GM12878 (cell line): ENCODE measurements at regions of chr22 and their contacts with region 1.

Region 1: DNA sequence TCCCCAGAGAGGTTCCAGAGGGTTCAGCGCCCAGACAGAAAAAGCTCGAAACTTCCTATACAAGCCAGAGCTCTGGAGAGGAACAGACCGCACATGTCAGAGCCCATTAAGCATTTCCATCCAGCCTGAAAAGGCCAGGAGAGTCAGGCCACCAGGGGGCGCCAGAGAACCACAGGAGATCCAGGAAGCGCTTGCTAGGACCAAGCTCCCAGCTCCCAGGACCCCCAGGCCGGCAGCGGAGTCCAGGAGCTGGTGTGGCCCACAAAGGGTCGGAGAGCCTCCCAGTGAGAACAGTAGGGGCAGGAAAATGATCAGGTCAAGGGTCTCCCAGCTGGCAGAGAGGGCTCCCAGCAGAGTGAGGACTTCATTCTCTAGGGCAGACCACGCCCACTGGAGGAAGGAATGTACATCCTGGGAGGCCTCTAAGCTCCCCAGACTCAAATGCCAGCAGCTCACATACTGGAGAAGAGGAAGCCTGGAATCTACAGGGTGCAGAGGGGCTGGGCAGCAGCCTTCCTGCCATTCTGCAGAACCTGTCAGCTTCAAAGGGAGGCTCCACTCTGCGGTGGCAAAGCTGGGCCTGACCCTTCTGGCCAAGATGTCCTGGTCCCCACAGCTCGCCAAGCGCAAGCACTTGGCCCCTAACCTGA is 2.1 kb upstream of the MEI1 start:
- DNase-seq: peak; percentile 57
- ATAC-seq: peak; percentile 94
- H3K4me3 ChIP-seq: no peak overlapping the region
- H3K27ac ChIP-seq: peak overlapping the region; percentile 48; the same call in 1 of the 2 replicates
- H3K4me1 ChIP-seq: peaks cover 19% of the 10 kb centered on the region
- H3K27me3 ChIP-seq: no peaks in the 10 kb centered on the region
- CTCF ChIP-seq: peak; percentile 97 to 98 (median 98); a peak in 5 of 6 replicates
- EP300 ChIP-seq: no peak
- POLR2A ChIP-seq: no peak
- RAD21 ChIP-seq: peak; percentile 94

Region 2: DNA sequence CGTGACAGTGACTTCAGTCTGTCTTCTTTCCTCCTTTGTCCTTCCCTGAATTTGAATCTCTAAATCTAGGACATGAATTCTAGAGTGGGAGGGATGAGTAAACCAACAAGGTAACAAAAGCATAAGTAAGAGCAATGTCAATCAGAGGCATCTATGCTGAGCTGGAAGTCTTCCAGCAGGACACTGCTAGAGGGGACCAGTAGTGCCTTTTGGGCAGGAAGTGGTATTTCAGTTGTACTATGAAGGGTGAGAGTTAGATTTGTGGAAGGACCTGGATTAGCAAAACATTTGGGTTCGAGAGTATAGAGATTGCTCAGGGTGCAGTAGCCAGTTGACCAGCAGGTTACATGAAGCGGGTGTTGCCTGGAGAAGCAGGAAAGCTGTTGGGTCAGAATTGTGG is 42.3 kb after region 1 on chr22:
- CTCF ChIA-PET with region 1: interaction called, 71 read pairs
- POLR2A ChIA-PET with region 1: interaction called, 4 read pairs
- RAD21 ChIA-PET with region 1: interaction called, 7 read pairs
- SMC1A ChIA-PET with region 1: interaction called, 6 read pairs
- in situ Hi-C with region 1: no loop called
- intact Hi-C with region 1: no loop called
- DNase-seq: peak; percentile 30
- ATAC-seq: peak; percentile 73
- H3K4me3 ChIP-seq: no peak overlapping the region
- H3K27ac ChIP-seq: peak overlapping the region; percentile 26; the same call in 1 of the 2 replicates
- H3K4me1 ChIP-seq: peaks cover 7% of the 10 kb centered on the region
- H3K27me3 ChIP-seq: no peaks in the 10 kb centered on the region
- CTCF ChIP-seq: no peak
- EP300 ChIP-seq: no peak
- POLR2A ChIP-seq: no peak
- RAD21 ChIP-seq: no peak

Region 3: GRCh38 chr22:41762980-41763779 is 65.9 kb after region 1 on chr22:
- CTCF ChIA-PET with region 1: interaction called, 69 read pairs
- POLR2A ChIA-PET with region 1: interaction called, 6 read pairs
- RAD21 ChIA-PET with region 1: interaction called, 36 read pairs
- SMC1A ChIA-PET with region 1: interaction called, 21 read pairs
- in situ Hi-C with region 1: no loop called
- intact Hi-C with region 1: no loop called
- DNase-seq: no peak
- ATAC-seq: peak; percentile 92
- H3K4me3 ChIP-seq: no peak overlapping the region
- H3K27ac ChIP-seq: no peak overlapping the region
- H3K4me1 ChIP-seq: no peaks in the 10 kb centered on the region
- H3K27me3 ChIP-seq: no peaks in the 10 kb centered on the region
- CTCF ChIP-seq: peak; percentile 50 to 74 (median 67); a peak in 5 of 6 replicates
- EP300 ChIP-seq: no peak
- POLR2A ChIP-seq: no peak
- RAD21 ChIP-seq: peak; percentile 62

Region 4: DNA sequence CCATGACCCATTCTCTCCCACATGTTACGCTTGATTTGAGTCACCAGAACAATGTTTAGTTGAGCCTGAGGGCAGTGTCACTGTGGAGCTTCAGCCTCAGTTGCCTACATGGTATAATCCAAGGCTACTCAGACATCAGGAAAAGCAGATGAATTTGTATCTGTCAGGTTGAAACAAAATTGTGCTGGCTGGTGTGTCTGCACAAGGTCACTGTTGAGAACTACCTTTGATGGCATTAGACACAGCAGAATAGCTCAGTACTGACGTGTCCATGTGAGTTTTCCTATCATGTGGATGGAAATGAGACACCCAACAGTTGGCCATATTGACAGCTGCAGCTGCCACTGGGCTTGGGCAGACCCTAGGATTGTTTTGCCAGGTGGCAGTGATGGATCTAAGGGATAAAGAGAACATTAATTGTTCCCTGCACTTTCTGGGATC is 119.0 kb after region 1 on chr22:
- CTCF ChIA-PET with region 1: interaction called, 22 read pairs
- POLR2A ChIA-PET with region 1: no interaction called
- RAD21 ChIA-PET with region 1: interaction called, 4 read pairs
- SMC1A ChIA-PET with region 1: interaction called, 10 read pairs
- in situ Hi-C with region 1: no loop called
- intact Hi-C with region 1: no loop called
- DNase-seq: no peak
- ATAC-seq: no peak
- H3K4me3 ChIP-seq: no peak overlapping the region
- H3K27ac ChIP-seq: no peak overlapping the region
- H3K4me1 ChIP-seq: no peaks in the 10 kb centered on the region
- H3K27me3 ChIP-seq: no peaks in the 10 kb centered on the region
- CTCF ChIP-seq: no peak
- EP300 ChIP-seq: no peak
- POLR2A ChIP-seq: no peak
- RAD21 ChIP-seq: no peak

Region 5: GRCh38 chr22:41873391-41873790 is 176.1 kb after region 1 on chr22:
- CTCF ChIA-PET with region 1: interaction called, 14 read pairs
- POLR2A ChIA-PET with region 1: no interaction called
- RAD21 ChIA-PET with region 1: interaction called, 3 read pairs
- SMC1A ChIA-PET with region 1: interaction called, 5 read pairs
- in situ Hi-C with region 1: no loop called
- intact Hi-C with region 1: no loop called
- DNase-seq: no peak
- ATAC-seq: peak; percentile 34
- H3K4me3 ChIP-seq: no peak overlapping the region
- H3K27ac ChIP-seq: no peak overlapping the region
- H3K4me1 ChIP-seq: no peaks in the 10 kb centered on the region
- H3K27me3 ChIP-seq: no peaks in the 10 kb centered on the region
- CTCF ChIP-seq: no peak
- EP300 ChIP-seq: no peak
- POLR2A ChIP-seq: no peak
- RAD21 ChIP-seq: no peak

Region 6: DNA sequence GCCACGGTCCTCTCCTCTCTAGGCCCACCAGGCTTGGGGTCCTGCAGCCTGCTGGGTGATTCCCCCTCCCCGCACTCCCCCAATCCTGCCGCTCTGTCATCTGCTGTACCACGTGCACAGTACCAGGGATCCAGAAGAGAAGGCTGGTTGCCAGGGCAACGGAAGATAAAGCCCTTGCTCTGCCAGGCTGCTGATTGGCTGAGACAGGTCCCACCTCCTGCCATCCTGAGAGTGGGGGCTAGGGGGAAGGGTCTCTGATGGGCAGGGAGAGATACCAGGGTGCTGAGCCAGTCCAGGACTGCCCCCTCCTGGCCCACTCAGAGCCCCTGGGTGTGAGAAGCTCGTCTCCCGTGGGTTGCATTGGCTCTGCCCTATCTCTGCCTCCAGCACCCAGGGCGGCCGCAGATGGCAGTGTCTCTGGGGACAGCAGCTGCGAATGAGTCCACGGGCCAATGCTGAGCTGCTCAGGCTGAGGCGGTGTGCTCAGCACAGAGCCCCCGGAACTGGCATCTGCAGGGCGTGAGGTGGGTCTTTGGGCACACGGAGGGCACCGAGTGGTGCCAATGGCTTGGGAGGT is 254.7 kb after region 1 on chr22 and contains the start of gene SMIM45:
- CTCF ChIA-PET with region 1: interaction called, 12 read pairs
- POLR2A ChIA-PET with region 1: interaction called, 8 read pairs
- RAD21 ChIA-PET with region 1: interaction called, 17 read pairs
- SMC1A ChIA-PET with region 1: interaction called, 4 read pairs
- in situ Hi-C with region 1: no loop called
- intact Hi-C with region 1: no loop called
- DNase-seq: no peak
- ATAC-seq: peak; percentile 35
- H3K4me3 ChIP-seq: no peak within 1 kb of the TSS
- H3K27ac ChIP-seq: no peak within 1 kb of the TSS
- H3K4me1 ChIP-seq: peaks cover 41% of the 10 kb centered on the region
- H3K27me3 ChIP-seq: no peaks in the 10 kb centered on the region
- CTCF ChIP-seq: peak in 1 of 3 experiments; percentile 19; a peak in 2 of 6 replicates
- EP300 ChIP-seq: no peak
- POLR2A ChIP-seq: no peak
- RAD21 ChIP-seq: no peak

Region 7: GRCh38 chr22:42889304-42889703 is 1192.1 kb after region 1 on chr22:
- CTCF ChIA-PET with region 1: no interaction called
- POLR2A ChIA-PET with region 1: no interaction called
- RAD21 ChIA-PET with region 1: no interaction called
- SMC1A ChIA-PET with region 1: no interaction called
- in situ Hi-C with region 1: no loop called
- intact Hi-C with region 1: no loop called
- DNase-seq: peak; percentile 97
- ATAC-seq: peak; percentile 90
- H3K4me3 ChIP-seq: peak overlapping the region; percentile 19; the same call in 1 of the 2 replicates
- H3K27ac ChIP-seq: peak overlapping the region; percentile 84
- H3K4me1 ChIP-seq: peaks cover 58% of the 10 kb centered on the region
- H3K27me3 ChIP-seq: no peaks in the 10 kb centered on the region
- CTCF ChIP-seq: no peak
- EP300 ChIP-seq: peak; percentile 89 to 93
- POLR2A ChIP-seq: peak; percentile 52
- RAD21 ChIP-seq: no peak